ENCODE measurements at regions of chr15 and their contacts with region 1.

Region 1: DNA sequence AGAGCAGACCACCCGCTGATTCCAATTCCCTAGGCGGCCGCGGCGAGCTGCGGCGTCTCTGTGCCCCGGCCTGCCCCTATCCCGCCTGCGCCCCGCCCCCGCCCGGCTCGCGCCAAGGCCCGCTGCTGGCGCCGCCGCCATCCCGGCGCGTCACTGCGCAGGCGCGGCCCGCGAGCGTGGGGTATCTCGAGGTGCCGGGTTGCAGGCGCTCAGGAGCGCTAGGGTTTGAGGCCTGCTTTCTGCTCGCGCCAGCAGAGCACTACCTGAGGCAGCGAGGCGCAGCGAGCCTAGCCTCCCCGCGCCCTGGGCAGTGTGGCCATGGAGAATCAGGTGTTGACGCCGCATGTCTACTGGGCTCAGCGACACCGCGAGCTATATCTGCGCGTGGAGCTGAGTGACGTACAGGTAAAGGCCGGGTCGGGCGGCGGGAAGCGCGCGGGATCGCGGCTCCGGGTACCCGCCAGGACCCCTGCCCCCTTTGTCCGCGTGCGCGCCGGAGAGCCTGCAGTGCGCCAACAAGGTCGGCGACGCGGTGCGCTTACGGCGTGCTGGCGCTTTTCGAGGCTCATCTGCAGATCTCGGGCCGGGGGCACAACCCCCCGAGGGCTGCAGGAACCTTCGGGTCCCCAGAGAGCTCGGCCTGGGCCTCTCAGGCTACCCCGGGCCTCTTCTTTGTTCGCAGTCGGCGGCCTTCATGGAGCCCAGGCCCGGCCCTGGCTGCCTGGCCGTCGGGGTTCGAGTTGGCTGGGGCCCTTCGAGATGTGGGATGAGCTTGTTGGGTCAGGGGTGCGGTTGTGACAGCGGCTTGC is at the start of gene HACD3:
- DNase-seq: peak; percentile 88
- H3K4me3 Mint-ChIP-seq: peak within 1 kb of the TSS; percentile 81
- H3K27ac Mint-ChIP-seq: peak within 1 kb of the TSS; percentile 87
- H3K4me1 Mint-ChIP-seq: peaks cover 37% of the 10 kb centered on the region
- H3K27me3 Mint-ChIP-seq: no peaks in the 10 kb centered on the region
- total RNA-seq, gene HACD3: 31.3 to 32.8 TPM

Region 2: GRCh38 chr15:65509321-65509720 is 21.2 kb before region 1 on chr15:
- CTCF ChIA-PET with region 1: no interaction called
- POLR2A ChIA-PET with region 1: no interaction called
- DNase-seq: no peak
- H3K4me3 Mint-ChIP-seq: no peak overlapping the region
- H3K27ac Mint-ChIP-seq: no peak overlapping the region
- H3K4me1 Mint-ChIP-seq: peaks cover 22% of the 10 kb centered on the region
- H3K27me3 Mint-ChIP-seq: no peaks in the 10 kb centered on the region

Region 3: GRCh38 chr15:65541231-65541820 is 10.8 kb after region 1 on chr15:
- CTCF ChIA-PET with region 1: interaction called, 10 read pairs
- POLR2A ChIA-PET with region 1: no interaction called
- DNase-seq: no peak
- H3K4me3 Mint-ChIP-seq: no peak overlapping the region
- H3K27ac Mint-ChIP-seq: no peak overlapping the region
- H3K4me1 Mint-ChIP-seq: peaks cover 1% of the 10 kb centered on the region
- H3K27me3 Mint-ChIP-seq: no peaks in the 10 kb centered on the region